ENCODE measurements at regions of chr20 and their contacts with region 1.

Region 1: GRCh38 chr20:3218307-3218988 is 9.2 kb downstream of the ITPA start:
- DNase-seq: peak; percentile 60
- H3K4me3 Mint-ChIP-seq: no peak overlapping the region
- H3K27ac Mint-ChIP-seq: no peak overlapping the region
- H3K4me1 Mint-ChIP-seq: peaks cover 4% of the 10 kb centered on the region
- H3K27me3 Mint-ChIP-seq: no peaks in the 10 kb centered on the region
- CTCF ChIP-seq: peak; percentile 98

Region 2: GRCh38 chr20:3106658-3107463 is 111.6 kb before region 1 on chr20:
- CTCF ChIA-PET with region 1: no interaction called
- POLR2A ChIA-PET with region 1: no interaction called
- intact Hi-C with region 1: no loop called
- DNase-seq: no peak
- H3K4me3 Mint-ChIP-seq: no peak overlapping the region
- H3K27ac Mint-ChIP-seq: peak overlapping the region; percentile 16
- H3K4me1 Mint-ChIP-seq: peaks cover 5% of the 10 kb centered on the region
- H3K27me3 Mint-ChIP-seq: no peaks in the 10 kb centered on the region
- CTCF ChIP-seq: no peak

Region 3: GRCh38 chr20:3239026-3239866 is 20.8 kb after region 1 on chr20 and contains the start of gene SLC4A11:
- CTCF ChIA-PET with region 1: interaction called, 6 read pairs
- POLR2A ChIA-PET with region 1: interaction called, 14 read pairs
- intact Hi-C with region 1: no loop called
- DNase-seq: peak; percentile 73
- H3K4me3 Mint-ChIP-seq: peak within 1 kb of the TSS; percentile 86
- H3K27ac Mint-ChIP-seq: no peak within 1 kb of the TSS
- H3K4me1 Mint-ChIP-seq: peaks cover 35% of the 10 kb centered on the region
- H3K27me3 Mint-ChIP-seq: no peaks in the 10 kb centered on the region
- CTCF ChIP-seq: no peak
- total RNA-seq, gene SLC4A11: 4.1 and 5.7 TPM in 2 replicates

Region 4: DNA sequence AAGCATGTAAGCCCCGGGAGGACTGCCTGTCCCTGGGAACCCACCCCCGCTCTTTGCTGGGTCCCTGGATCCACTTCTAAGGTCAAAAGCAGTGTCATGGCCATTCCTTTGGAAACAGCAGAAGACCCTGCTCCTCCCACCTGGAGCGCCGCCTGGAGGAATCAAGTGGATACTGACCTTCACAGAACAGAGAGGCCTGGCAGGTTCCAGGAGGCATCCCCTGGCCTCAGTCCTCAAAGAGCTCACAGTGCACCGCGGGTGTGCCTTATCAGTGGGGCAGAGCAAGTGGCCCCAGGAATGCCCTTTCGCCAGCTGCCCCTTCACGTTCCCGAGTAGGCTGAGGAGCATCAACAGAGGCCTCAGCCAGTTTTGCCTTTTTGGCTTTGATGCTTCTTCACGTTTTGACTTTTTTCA is 31.6 kb after region 1 on chr20:
- CTCF ChIA-PET with region 1: interaction called, 7 read pairs
- POLR2A ChIA-PET with region 1: interaction called, 8 read pairs
- intact Hi-C with region 1: loop called (anchors 1 kb)
- DNase-seq: peak; percentile 34
- H3K4me3 Mint-ChIP-seq: no peak overlapping the region
- H3K27ac Mint-ChIP-seq: no peak overlapping the region
- H3K4me1 Mint-ChIP-seq: no peaks in the 10 kb centered on the region
- H3K27me3 Mint-ChIP-seq: no peaks in the 10 kb centered on the region
- CTCF ChIP-seq: no peak

Region 5: GRCh38 chr20:3276680-3277015 is 58.2 kb after region 1 on chr20:
- CTCF ChIA-PET with region 1: interaction called, 7 read pairs
- POLR2A ChIA-PET with region 1: interaction called, 4 read pairs
- intact Hi-C with region 1: loop called (anchors 1 kb)
- DNase-seq: peak; percentile 50
- H3K4me3 Mint-ChIP-seq: no peak overlapping the region
- H3K27ac Mint-ChIP-seq: no peak overlapping the region
- H3K4me1 Mint-ChIP-seq: no peaks in the 10 kb centered on the region
- H3K27me3 Mint-ChIP-seq: no peaks in the 10 kb centered on the region
- CTCF ChIP-seq: peak; percentile 36

Region 6: GRCh38 chr20:3323398-3323797 is 105.0 kb after region 1 on chr20:
- CTCF ChIA-PET with region 1: interaction called, 34 read pairs
- POLR2A ChIA-PET with region 1: interaction called, 3 read pairs
- intact Hi-C with region 1: no loop called
- DNase-seq: peak; percentile 79
- H3K4me3 Mint-ChIP-seq: no peak overlapping the region
- H3K27ac Mint-ChIP-seq: no peak overlapping the region
- H3K4me1 Mint-ChIP-seq: peaks cover 5% of the 10 kb centered on the region
- H3K27me3 Mint-ChIP-seq: no peaks in the 10 kb centered on the region
- CTCF ChIP-seq: no peak

Region 7: GRCh38 chr20:3330046-3330741 is 111.7 kb after region 1 on chr20:
- CTCF ChIA-PET with region 1: interaction called, 10 read pairs
- POLR2A ChIA-PET with region 1: no interaction called
- intact Hi-C with region 1: no loop called
- DNase-seq: peak; percentile 24
- H3K4me3 Mint-ChIP-seq: no peak overlapping the region
- H3K27ac Mint-ChIP-seq: peak overlapping the region; percentile 19
- H3K4me1 Mint-ChIP-seq: no peaks in the 10 kb centered on the region
- H3K27me3 Mint-ChIP-seq: no peaks in the 10 kb centered on the region
- CTCF ChIP-seq: no peak

Region 8: GRCh38 chr20:3423126-3423525 is 204.7 kb after region 1 on chr20:
- CTCF ChIA-PET with region 1: no interaction called
- POLR2A ChIA-PET with region 1: no interaction called
- intact Hi-C with region 1: no loop called
- DNase-seq: peak; percentile 7
- H3K4me3 Mint-ChIP-seq: no peak overlapping the region
- H3K27ac Mint-ChIP-seq: no peak overlapping the region
- H3K4me1 Mint-ChIP-seq: peaks cover 8% of the 10 kb centered on the region
- H3K27me3 Mint-ChIP-seq: no peaks in the 10 kb centered on the region
- CTCF ChIP-seq: no peak